HepG2 (cell line): ENCODE measurements at regions of chr19 and their contacts with region 1.

Region 1: GRCh38 chr19:56900573-56901097 is 60.1 kb upstream of the PEG3 start:
- DNase-seq: peak; percentile 98
- ATAC-seq: peak; percentile 96
- H3K4me3 ChIP-seq: peak overlapping the region in 1 of 3 experiments; percentile 30; a peak in 1 of 6 replicates
- H3K27ac ChIP-seq: peak overlapping the region; percentile 98
- H3K4me1 ChIP-seq: peaks cover 65% of the 10 kb centered on the region
- H3K27me3 ChIP-seq: no peaks in the 10 kb centered on the region
- CTCF ChIP-seq: peak; percentile 17; the same call in 1 of the 2 replicates
- EP300 ChIP-seq: peak; percentile 98 to 99
- POLR2A ChIP-seq: peak; percentile 72 to 75
- RAD21 ChIP-seq: peak; percentile 68

Region 2: DNA sequence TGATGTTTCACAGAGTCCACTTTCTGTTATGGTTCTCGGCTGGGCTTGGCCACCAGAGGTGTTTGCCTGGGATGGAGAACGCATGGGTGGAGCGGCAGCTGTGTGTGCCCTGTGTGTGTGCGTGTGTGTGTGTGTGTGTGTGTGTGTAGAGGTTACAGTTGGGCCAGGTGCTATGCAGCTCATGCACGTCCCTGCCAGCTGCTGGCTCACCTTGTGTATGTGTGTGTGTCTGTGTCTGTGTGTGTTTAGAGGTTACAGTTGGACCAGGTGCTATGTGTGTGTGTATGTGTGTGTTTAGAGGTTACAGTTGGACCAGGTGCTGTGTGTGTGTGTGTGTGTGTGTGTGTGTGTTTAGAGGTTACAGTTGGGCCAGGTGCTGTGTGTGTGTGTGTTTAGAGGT is 27.1 kb before region 1 on chr19:
- CTCF ChIA-PET with region 1: no interaction called
- POLR2A ChIA-PET with region 1: no interaction called
- in situ Hi-C with region 1: no loop called
- intact Hi-C with region 1: no loop called
- DNase-seq: no peak
- ATAC-seq: no peak
- H3K4me3 ChIP-seq: no peak overlapping the region
- H3K27ac ChIP-seq: no peak overlapping the region
- H3K4me1 ChIP-seq: peaks cover 56% of the 10 kb centered on the region
- H3K27me3 ChIP-seq: no peaks in the 10 kb centered on the region
- CTCF ChIP-seq: no peak
- EP300 ChIP-seq: no peak
- POLR2A ChIP-seq: no peak
- RAD21 ChIP-seq: no peak

Region 3: GRCh38 chr19:56885173-56885987 is 15.3 kb before region 1 on chr19:
- CTCF ChIA-PET with region 1: no interaction called
- POLR2A ChIA-PET with region 1: interaction called, 14 read pairs
- in situ Hi-C with region 1: no loop called
- intact Hi-C with region 1: no loop called
- DNase-seq: peak; percentile 69
- ATAC-seq: peak; percentile 60
- H3K4me3 ChIP-seq: peak overlapping the region in 1 of 3 experiments; percentile 30; a peak in 2 of 6 replicates
- H3K27ac ChIP-seq: peak overlapping the region; percentile 84
- H3K4me1 ChIP-seq: peaks cover 72% of the 10 kb centered on the region
- H3K27me3 ChIP-seq: no peaks in the 10 kb centered on the region
- CTCF ChIP-seq: no peak
- EP300 ChIP-seq: peak; percentile 59 to 83; a peak in 1 of 4 replicates
- POLR2A ChIP-seq: no peak
- RAD21 ChIP-seq: no peak; the same call in 1 of the 2 replicates

Region 4: DNA sequence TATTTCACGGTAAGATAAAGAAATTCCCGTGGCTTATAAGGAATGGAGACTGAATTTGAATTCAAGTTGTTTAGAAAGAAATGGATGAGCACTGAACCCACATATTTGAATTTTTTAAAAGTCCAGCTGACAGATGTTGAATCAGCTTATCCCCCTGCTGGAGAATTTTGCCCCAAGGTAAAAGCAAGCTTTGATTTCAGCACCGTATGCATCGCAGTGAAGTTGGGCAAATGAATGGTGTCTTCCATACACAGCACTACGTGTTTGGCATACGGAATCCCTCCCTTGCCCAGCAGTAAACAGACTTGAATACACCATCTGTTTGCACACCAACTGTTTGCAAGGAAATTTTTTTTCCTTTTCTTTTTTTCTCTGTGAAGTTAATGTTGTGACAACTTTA is 17.4 kb after region 1 on chr19:
- CTCF ChIA-PET with region 1: no interaction called
- POLR2A ChIA-PET with region 1: interaction called, 10 read pairs
- in situ Hi-C with region 1: no loop called
- intact Hi-C with region 1: no loop called
- DNase-seq: peak; percentile 75
- ATAC-seq: peak; percentile 82
- H3K4me3 ChIP-seq: peak overlapping the region in 1 of 3 experiments; percentile 24; a peak in 1 of 6 replicates
- H3K27ac ChIP-seq: peak overlapping the region; percentile 70
- H3K4me1 ChIP-seq: peaks cover 57% of the 10 kb centered on the region
- H3K27me3 ChIP-seq: no peaks in the 10 kb centered on the region
- CTCF ChIP-seq: peak; percentile 42
- EP300 ChIP-seq: peak in 1 of 2 experiments; percentile 53; a peak in 1 of 4 replicates
- POLR2A ChIP-seq: no peak
- RAD21 ChIP-seq: no peak